Transverse colon (tissue), 4 donors: ENCODE measurements at regions of chr15 and their contacts with region 1.

Region 1: GRCh38 chr15:72616491-72617210 is 37.8 kb upstream of the GOLGA6B start:
- DNase-seq: no peak
- H3K4me3 ChIP-seq: no peak overlapping the region
- H3K27ac ChIP-seq: no peak overlapping the region
- H3K4me1 ChIP-seq: no peaks in the 10 kb centered on the region
- H3K27me3 ChIP-seq: no peaks in the 10 kb centered on the region
- CTCF ChIP-seq: no peak
- EP300 ChIP-seq: no peak
- POLR2A ChIP-seq: no peak

Region 2: DNA sequence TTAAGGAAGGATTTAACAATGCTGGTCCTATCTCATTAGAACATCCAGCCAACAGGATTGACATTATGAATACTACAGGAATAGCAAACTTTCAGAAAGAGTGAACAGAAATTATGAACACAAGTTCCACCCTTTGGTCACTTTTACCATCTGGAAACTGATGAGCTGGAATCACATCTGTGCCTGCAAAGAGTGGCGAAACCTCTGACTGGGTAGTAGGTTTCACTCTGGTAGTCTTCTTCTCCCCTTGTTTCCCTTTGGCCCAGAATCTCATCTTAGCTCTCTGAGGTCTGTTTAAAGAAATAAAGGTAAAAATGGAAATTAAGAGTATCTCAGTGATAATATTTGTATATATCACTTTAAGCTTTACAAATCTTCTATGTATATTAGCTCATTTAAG is 733.2 kb before region 1 on chr15:
- in situ Hi-C with region 1: no loop called
- intact Hi-C with region 1: loop called (anchors 5 kb)
- DNase-seq: no peak
- H3K4me3 ChIP-seq: no peak overlapping the region
- H3K27ac ChIP-seq: no peak overlapping the region
- H3K4me1 ChIP-seq: no peaks in the 10 kb centered on the region
- H3K27me3 ChIP-seq: no peaks in the 10 kb centered on the region
- CTCF ChIP-seq: no peak
- EP300 ChIP-seq: no peak
- POLR2A ChIP-seq: no peak

Region 3: GRCh38 chr15:72285927-72286516 is 330.6 kb before region 1 on chr15:
- in situ Hi-C with region 1: no loop called
- intact Hi-C with region 1: no loop called
- DNase-seq: peak; percentile 48
- H3K4me3 ChIP-seq: no peak overlapping the region
- H3K27ac ChIP-seq: no peak overlapping the region
- H3K4me1 ChIP-seq: no peaks in the 10 kb centered on the region
- H3K27me3 ChIP-seq: no peaks in the 10 kb centered on the region
- CTCF ChIP-seq: peak; percentile 52 to 57 (median 54)
- EP300 ChIP-seq: no peak
- POLR2A ChIP-seq: no peak